ENCODE measurements at regions of chr19 and their contacts with region 1.

Region 1: GRCh38 chr19:11293433-11294389 is 2.2 kb upstream of the TSPAN16 start:
- DNase-seq: peak; percentile 94
- H3K4me3 Mint-ChIP-seq: peak overlapping the region; percentile 51
- H3K27ac Mint-ChIP-seq: no peak overlapping the region
- H3K4me1 Mint-ChIP-seq: peaks cover 23% of the 10 kb centered on the region
- H3K27me3 Mint-ChIP-seq: no peaks in the 10 kb centered on the region
- CTCF ChIP-seq: peak; percentile 81

Region 2: DNA sequence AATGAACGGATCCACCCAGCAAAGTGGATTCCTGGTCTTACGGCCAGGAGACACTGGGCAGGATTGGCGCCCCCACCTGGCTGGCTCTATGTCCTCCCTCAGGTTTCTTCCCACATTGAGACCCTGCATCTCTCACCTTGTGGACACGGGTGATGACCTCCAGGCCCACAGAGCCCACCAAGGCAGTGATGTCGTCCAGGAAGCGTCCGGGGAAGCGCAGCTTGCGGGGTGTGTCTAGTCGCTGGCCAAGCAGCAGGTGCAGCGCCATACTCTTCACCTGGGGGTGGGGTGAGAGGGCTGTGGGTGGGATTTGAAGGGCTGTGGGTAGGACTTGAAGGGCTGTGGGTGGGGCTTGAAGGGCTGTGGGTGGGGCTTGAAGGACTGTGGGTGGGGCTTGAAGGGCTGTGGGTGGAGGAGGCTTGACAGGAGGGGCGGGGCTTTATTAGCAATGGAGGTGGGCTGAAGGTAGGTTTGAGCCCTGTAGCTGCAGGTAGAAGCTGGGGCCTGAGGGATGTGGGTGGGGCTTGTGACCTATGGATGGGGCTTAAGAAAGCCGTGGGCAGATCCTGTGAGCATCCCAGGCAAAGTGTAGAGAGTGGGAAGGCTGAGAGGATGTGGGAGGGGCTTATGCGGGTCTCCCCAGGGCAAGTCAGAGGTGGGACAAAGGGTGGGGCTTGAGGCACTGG is 66.4 kb before region 1 on chr19:
- CTCF ChIA-PET with region 1: no interaction called
- intact Hi-C with region 1: no loop called
- DNase-seq: peak; percentile 19
- H3K4me3 Mint-ChIP-seq: no peak overlapping the region
- H3K27ac Mint-ChIP-seq: peak overlapping the region; percentile 33
- H3K4me1 Mint-ChIP-seq: no peaks in the 10 kb centered on the region
- H3K27me3 Mint-ChIP-seq: no peaks in the 10 kb centered on the region
- CTCF ChIP-seq: no peak

Region 3: GRCh38 chr19:11346092-11346940 is 52.6 kb after region 1 on chr19 and contains the starts of genes CCDC159 and TMEM205:
- CTCF ChIA-PET with region 1: interaction called, 5 read pairs
- intact Hi-C with region 1: loop called (anchors 1 kb)
- DNase-seq: peak; percentile 95
- H3K4me3 Mint-ChIP-seq: peak within 1 kb of the TSS; percentile 94
- H3K27ac Mint-ChIP-seq: peak within 1 kb of the TSS; percentile 98
- H3K4me1 Mint-ChIP-seq: peaks cover 15% of the 10 kb centered on the region
- H3K27me3 Mint-ChIP-seq: no peaks in the 10 kb centered on the region
- CTCF ChIP-seq: no peak
- total RNA-seq, gene CCDC159: 11.8 and 13.2 TPM in 2 replicates
- total RNA-seq, gene TMEM205: 82.0 and 94.4 TPM in 2 replicates

Region 4: DNA sequence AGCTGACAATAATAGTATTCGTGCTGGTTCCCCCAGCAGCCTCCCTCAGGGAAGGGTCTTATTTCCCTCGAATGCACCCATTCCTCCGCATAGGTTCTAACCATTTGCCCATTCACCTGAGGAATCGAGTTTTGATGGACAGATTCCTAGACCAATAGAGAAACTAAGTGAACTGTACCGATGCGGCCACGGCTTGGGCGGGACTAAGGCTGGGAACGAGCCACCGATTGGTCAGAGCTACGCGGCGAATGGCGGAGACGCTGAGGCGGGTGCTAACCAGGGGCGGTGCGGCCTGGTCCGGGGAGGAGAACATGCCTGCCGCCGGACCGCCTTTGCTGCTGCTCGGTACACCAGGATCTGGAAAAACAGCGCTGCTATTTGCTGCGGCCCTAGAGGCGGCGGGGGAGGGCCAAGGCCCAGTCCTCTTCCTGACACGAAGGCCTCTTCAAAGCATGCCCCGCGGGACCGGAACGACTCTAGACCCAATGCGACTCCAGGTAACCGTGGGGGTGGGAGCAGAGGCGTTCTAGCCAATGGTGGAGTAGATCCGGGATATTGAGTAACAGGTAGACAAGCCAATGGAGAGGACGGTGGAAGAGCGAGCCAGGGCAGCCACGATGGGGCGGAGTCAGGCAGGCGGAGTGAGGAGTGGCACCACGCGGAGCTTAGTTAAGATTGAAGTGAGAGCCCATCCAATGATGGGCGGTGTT is 80.9 kb after region 1 on chr19 and contains the start of gene SWSAP1:
- CTCF ChIA-PET with region 1: interaction called, 18 read pairs
- intact Hi-C with region 1: no loop called
- DNase-seq: peak; percentile 93
- H3K4me3 Mint-ChIP-seq: no peak within 1 kb of the TSS
- H3K27ac Mint-ChIP-seq: no peak within 1 kb of the TSS
- H3K4me1 Mint-ChIP-seq: peaks cover 9% of the 10 kb centered on the region
- H3K27me3 Mint-ChIP-seq: no peaks in the 10 kb centered on the region
- CTCF ChIP-seq: no peak
- total RNA-seq, gene SWSAP1: 1.7 and 2.0 TPM in 2 replicates

Region 5: GRCh38 chr19:11380653-11381534 is 87.2 kb after region 1 on chr19:
- CTCF ChIA-PET with region 1: interaction called, 15 read pairs
- intact Hi-C with region 1: loop called (anchors 5 kb)
- DNase-seq: peak; percentile 95
- H3K4me3 Mint-ChIP-seq: peak overlapping the region; percentile 80
- H3K27ac Mint-ChIP-seq: peak overlapping the region; percentile 90
- H3K4me1 Mint-ChIP-seq: peaks cover 29% of the 10 kb centered on the region
- H3K27me3 Mint-ChIP-seq: no peaks in the 10 kb centered on the region
- CTCF ChIP-seq: peak; percentile 33

Region 6: GRCh38 chr19:11401808-11402543 is 108.3 kb after region 1 on chr19:
- CTCF ChIA-PET with region 1: interaction called, 16 read pairs
- intact Hi-C with region 1: no loop called
- DNase-seq: no peak
- H3K4me3 Mint-ChIP-seq: no peak overlapping the region
- H3K27ac Mint-ChIP-seq: no peak overlapping the region
- H3K4me1 Mint-ChIP-seq: no peaks in the 10 kb centered on the region
- H3K27me3 Mint-ChIP-seq: no peaks in the 10 kb centered on the region
- CTCF ChIP-seq: no peak

Region 7: GRCh38 chr19:11446652-11447301 is 153.1 kb after region 1 on chr19:
- CTCF ChIA-PET with region 1: no interaction called
- intact Hi-C with region 1: loop called (anchors 10 kb)
- DNase-seq: peak; percentile 60
- H3K4me3 Mint-ChIP-seq: no peak overlapping the region
- H3K27ac Mint-ChIP-seq: no peak overlapping the region
- H3K4me1 Mint-ChIP-seq: no peaks in the 10 kb centered on the region
- H3K27me3 Mint-ChIP-seq: no peaks in the 10 kb centered on the region
- CTCF ChIP-seq: peak; percentile 45